ENCODE measurements at regions of chr1 and their contacts with region 1.

Region 1: GRCh38 chr1:204162231-204163074 is 3.7 kb downstream of the REN start:
- DNase-seq: peak in 1 of 2 donors; percentile 84
- H3K4me3 ChIP-seq: no peak overlapping the region
- H3K27ac ChIP-seq: no peak overlapping the region
- H3K4me1 ChIP-seq: no peaks in the 10 kb centered on the region
- H3K27me3 ChIP-seq: no peaks in the 10 kb centered on the region
- CTCF ChIP-seq: peak; percentile 87 to 99 (median 92)

Region 2: DNA sequence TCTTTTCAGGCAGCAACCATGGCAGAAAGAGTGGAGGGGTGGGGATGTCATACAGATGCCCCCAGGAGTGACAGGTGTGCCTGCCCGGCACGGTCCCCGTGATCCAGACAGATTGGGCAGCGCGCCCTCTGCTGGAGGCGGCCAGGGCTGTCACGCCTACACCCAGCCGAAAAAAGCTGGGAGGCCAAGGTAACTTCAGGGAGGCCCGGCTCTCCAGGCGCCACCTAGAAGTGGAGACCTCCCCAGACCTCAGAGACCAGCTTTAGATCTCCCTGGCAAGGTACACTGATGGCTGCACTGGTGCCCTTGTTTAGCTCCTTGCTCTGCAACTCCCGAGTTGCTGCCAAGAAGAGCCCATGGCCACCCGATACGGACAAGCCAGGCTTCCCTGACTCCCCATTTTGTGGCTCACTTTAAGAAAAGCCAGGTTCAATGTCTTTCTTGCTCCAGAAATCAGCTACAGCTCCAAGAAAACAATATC is 44.7 kb after region 1 on chr1:
- intact Hi-C with region 1: loop called (anchors 2 kb)
- DNase-seq: peak in 1 of 2 donors; percentile 74
- H3K4me3 ChIP-seq: no peak overlapping the region
- H3K27ac ChIP-seq: no peak overlapping the region
- H3K4me1 ChIP-seq: no peaks in the 10 kb centered on the region
- H3K27me3 ChIP-seq: no peaks in the 10 kb centered on the region
- CTCF ChIP-seq: peak; percentile 64 to 80 (median 69)

Region 3: DNA sequence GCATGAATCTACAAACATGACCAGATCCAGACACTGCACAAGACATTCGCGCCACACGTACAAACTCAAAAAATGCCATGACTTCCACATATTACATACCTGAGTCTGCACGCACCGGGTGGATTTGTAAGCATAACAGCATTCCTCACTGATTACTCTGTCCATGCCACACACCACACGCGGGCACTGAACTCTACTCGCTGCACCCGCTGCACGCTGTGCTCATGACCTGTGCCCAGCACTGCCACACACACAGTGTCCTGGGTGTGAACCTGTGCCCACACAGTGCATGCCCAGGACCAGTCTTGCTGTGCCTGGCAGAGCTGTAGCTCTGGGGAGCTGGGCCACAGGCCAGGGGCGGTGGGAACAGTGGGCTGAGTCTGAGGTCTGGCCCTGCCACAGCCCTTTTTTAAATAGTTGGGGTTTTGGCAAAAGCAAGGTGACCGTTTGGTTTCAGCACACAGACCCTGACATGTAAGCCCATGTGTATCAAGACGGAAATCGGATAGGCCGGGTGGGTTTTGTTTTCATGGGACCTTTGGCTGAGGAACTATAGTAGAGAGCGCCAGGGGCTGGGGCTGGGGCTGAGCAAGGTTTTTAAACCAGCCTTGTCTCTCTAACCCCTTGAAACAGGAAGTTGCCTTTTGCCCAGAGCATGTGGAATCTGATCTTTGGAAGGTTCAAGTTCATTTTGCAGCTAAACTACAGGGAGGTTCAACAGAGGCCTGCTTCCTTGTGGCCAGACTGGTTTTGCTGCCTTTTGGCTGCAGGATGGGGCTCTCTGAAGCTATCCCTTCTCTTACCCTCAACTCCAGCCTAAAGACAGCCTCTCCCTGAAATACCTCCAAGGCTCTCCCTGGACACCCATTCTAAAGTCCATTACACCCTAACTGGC is 63.6 kb after region 1 on chr1:
- intact Hi-C with region 1: no loop called
- DNase-seq: no peak
- H3K4me3 ChIP-seq: no peak overlapping the region
- H3K27ac ChIP-seq: no peak overlapping the region
- H3K4me1 ChIP-seq: no peaks in the 10 kb centered on the region
- H3K27me3 ChIP-seq: no peaks in the 10 kb centered on the region
- CTCF ChIP-seq: no peak

Region 4: DNA sequence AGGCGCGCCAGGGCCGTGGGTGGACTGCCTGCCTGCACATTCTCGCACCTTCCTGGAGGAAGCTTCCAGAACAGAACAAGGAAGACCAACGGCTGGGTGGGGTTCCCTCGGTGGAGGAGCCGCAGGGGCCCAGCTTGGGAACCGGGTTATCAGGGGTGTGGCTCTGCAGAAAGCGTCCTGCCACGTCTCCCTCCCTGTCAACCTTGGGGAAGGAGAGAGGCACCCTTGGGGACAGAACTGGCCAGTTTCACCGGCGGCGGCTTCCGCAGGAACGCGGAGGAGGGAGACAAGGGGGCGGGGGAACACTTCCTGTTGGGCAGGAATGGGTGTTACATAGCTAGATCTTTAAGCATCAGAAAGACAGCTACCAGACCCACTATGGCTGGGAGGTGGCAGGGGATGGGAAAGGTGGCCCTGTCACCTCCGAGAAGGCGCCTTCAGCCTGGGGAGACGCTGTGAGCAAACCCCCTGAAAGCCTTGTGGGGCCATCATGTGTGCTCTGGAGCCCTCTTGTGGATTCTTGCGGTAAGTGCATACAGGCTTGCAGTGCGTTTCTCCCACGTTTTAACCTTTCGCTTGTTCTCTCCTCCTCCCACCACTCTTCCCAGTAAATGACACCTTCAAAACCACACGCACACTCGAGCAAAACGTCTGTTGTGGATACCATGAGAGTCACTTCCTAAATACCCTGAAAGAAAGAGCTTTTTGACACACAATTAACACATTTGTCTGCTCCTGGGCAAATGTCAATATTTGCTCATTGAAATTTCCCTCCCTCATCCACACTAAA is 201.1 kb after region 1 on chr1:
- intact Hi-C with region 1: loop called (anchors 1 kb)
- DNase-seq: peak in 1 of 2 donors; percentile 82
- H3K4me3 ChIP-seq: peak overlapping the region; percentile 48 to 64
- H3K27ac ChIP-seq: no peak overlapping the region
- H3K4me1 ChIP-seq: peaks cover 2 to 4% of the 10 kb centered on the region in 2 donors
- H3K27me3 ChIP-seq: no peaks in the 10 kb centered on the region
- CTCF ChIP-seq: peak; percentile 91 to 99 (median 95)